ENCODE measurements at regions of chr20 and their contacts with region 1.

Region 1: GRCh38 chr20:20568604-20569205 is 143.7 kb downstream of the RALGAPA2 start:
- DNase-seq: peak; percentile 52
- H3K4me3 Mint-ChIP-seq: no peak overlapping the region
- H3K27ac Mint-ChIP-seq: no peak overlapping the region
- H3K4me1 Mint-ChIP-seq: peaks cover 2% of the 10 kb centered on the region
- H3K27me3 Mint-ChIP-seq: no peaks in the 10 kb centered on the region

Region 2: GRCh38 chr20:20083807-20084206 is 484.9 kb before region 1 on chr20:
- CTCF ChIA-PET with region 1: interaction called, 11 read pairs
- POLR2A ChIA-PET with region 1: no interaction called
- intact Hi-C with region 1: loop called (anchors 2 kb)
- DNase-seq: no peak
- H3K4me3 Mint-ChIP-seq: no peak overlapping the region
- H3K27ac Mint-ChIP-seq: no peak overlapping the region
- H3K4me1 Mint-ChIP-seq: no peaks in the 10 kb centered on the region
- H3K27me3 Mint-ChIP-seq: peaks cover 11% of the 10 kb centered on the region

Region 3: DNA sequence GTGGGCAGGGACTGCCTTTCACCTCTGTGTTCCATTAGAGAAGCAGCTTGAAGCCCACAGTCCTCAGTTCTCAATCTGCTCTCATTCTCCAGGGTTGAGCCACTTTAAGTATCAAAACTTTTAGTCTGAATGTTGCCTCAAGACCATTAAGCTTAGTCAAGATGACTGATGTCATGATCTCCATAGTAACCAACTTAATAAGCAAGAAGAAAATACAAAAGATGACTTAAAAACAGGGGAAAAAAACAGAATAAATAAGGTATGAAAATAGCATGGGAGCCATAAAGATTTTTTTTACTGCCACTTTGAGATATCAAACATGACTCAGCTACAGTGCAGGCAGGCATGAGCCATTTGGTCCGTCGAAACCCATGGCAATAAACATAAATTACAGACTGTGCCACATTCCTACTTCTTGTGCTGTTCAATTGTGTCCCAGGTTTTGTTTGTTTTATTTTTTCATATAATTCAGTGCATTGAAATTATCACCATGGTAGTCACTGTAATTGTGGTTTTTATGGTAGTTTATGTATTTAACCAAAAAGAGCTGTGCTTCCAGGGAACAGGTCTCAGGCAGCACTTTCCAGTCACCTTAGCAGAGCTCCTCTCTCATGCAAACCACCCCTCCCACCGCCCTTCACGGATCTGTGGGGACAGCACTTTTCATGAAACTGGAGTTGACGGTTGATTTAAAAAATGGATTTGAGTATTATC is 357.3 kb before region 1 on chr20:
- CTCF ChIA-PET with region 1: no interaction called
- POLR2A ChIA-PET with region 1: no interaction called
- intact Hi-C with region 1: loop called (anchors 10 kb)
- DNase-seq: no peak
- H3K4me3 Mint-ChIP-seq: no peak overlapping the region
- H3K27ac Mint-ChIP-seq: no peak overlapping the region
- H3K4me1 Mint-ChIP-seq: no peaks in the 10 kb centered on the region
- H3K27me3 Mint-ChIP-seq: peaks cover 10% of the 10 kb centered on the region

Region 4: GRCh38 chr20:20407891-20408805 is 160.6 kb before region 1 on chr20:
- CTCF ChIA-PET with region 1: no interaction called
- POLR2A ChIA-PET with region 1: no interaction called
- intact Hi-C with region 1: loop called (anchors 2 kb)
- DNase-seq: no peak
- H3K4me3 Mint-ChIP-seq: no peak overlapping the region
- H3K27ac Mint-ChIP-seq: no peak overlapping the region
- H3K4me1 Mint-ChIP-seq: peaks cover 25% of the 10 kb centered on the region
- H3K27me3 Mint-ChIP-seq: no peaks in the 10 kb centered on the region

Region 5: DNA sequence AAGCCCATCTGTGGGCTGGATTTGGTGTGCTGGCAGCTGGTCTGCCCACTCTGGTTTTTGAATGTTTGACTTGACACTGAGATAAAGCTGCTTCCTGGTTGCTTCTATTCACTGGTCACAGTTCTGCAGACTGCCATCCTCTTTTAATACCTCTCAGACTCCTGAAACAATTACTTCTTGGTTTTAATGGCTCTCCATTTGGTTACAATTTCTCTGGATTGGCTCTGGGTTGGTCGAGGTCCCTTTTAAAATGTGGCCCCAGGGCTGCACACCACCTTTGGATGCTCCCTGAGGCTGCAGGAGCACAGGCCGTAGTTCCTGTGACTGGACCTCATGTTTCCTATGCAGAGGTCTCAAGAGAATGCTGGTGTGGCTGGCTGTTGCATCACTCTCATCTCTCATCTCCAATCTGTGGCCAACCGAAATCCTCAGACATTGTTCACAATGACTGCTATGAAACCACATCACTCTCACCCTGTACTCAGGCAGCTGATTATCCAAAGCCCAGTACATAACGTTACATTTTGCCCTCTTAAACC is 102.3 kb before region 1 on chr20:
- CTCF ChIA-PET with region 1: no interaction called
- POLR2A ChIA-PET with region 1: no interaction called
- intact Hi-C with region 1: loop called (anchors 2 kb)
- DNase-seq: peak; percentile 64
- H3K4me3 Mint-ChIP-seq: no peak overlapping the region
- H3K27ac Mint-ChIP-seq: peak overlapping the region; percentile 81
- H3K4me1 Mint-ChIP-seq: peaks cover 24% of the 10 kb centered on the region
- H3K27me3 Mint-ChIP-seq: no peaks in the 10 kb centered on the region

Region 6: DNA sequence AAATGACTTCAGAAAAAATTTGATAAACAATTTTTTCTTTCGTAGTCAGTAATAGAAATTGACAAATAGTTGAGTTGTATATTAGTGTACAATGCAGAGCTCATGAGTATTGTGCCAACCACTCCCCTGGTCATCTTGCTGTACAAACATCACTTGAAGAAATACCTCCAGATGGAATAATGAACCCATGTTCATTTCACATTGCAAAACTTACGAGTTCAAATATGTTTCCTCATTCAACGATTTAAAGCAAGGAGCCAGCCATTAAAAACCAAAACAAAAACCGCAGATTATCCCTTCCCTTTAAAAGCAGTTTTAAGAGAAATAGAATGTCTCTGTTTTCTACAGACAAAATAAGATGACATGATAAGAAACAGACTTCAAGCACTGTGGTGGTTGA is 81.2 kb after region 1 on chr20:
- CTCF ChIA-PET with region 1: no interaction called
- POLR2A ChIA-PET with region 1: no interaction called
- intact Hi-C with region 1: no loop called
- DNase-seq: no peak
- H3K4me3 Mint-ChIP-seq: no peak overlapping the region
- H3K27ac Mint-ChIP-seq: no peak overlapping the region
- H3K4me1 Mint-ChIP-seq: no peaks in the 10 kb centered on the region
- H3K27me3 Mint-ChIP-seq: no peaks in the 10 kb centered on the region

Region 7: DNA sequence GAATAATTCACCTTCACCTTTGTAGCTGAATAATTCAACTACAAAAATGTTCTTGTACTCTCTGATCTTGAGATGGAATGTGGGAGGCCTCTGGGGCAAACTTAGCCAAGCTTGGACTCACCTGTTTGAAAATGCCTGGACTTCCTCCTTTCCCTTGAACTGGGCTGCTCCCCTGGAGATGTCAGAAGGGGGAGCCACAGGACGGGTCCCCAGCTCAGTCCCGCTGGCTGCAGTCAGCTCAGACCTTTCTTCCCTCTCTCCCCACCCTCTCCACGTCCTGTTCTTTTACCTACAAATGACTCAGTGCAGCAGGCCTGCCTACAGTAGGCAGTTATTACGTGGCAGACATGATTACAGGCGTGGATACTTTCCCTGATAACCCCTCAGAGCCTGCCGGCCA is 275.3 kb after region 1 on chr20:
- CTCF ChIA-PET with region 1: no interaction called
- POLR2A ChIA-PET with region 1: no interaction called
- intact Hi-C with region 1: no loop called
- DNase-seq: no peak
- H3K4me3 Mint-ChIP-seq: no peak overlapping the region
- H3K27ac Mint-ChIP-seq: no peak overlapping the region
- H3K4me1 Mint-ChIP-seq: no peaks in the 10 kb centered on the region
- H3K27me3 Mint-ChIP-seq: no peaks in the 10 kb centered on the region

Measured in activated CD4-positive, alpha-beta memory T cell treated with anti-CD3 and anti-CD28 coated beads for 36 hours (primary cell).